ENCODE measurements at regions of chr4 and their contacts with region 1.

Region 1: DNA sequence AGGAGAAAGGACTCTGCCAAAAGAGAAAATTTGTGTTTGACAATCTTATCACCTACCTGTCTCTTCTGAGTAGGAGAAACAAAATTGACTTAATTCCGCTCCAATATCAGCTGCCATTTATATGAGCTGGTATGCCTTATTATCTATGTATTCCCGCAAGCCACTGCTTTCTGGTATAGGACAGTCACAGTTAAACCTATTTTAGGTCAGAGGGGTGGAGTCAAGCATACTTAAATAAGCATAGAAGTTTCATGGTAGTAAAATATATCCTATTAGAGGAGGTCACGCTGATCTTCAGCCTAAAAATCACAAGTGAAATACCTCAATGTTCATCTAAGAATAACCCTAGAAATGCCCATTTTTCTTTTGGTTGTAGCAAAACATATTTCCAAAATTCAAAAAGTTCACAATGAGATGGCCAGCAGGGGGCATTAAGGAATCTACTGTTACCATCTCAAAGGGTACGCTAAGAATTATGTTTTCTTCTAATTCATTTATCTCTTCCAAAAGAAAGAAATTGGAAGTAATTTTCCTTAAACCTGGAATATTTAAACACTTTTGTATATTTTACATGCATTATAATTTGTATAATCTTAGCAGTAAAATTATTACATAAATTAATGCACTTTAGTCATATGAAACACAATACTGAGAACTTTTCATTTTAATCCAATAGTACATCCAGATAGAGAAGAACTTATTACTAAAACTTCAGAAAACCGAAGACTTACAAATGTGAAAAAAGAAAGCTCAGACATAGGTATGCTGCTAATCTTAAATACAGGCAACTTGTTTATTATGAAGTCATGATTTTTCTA is 10.5 kb downstream of the PPAT start:
- DNase-seq: peak; percentile 61
- H3K4me3 ChIP-seq: no peak overlapping the region
- H3K27ac ChIP-seq: no peak overlapping the region
- H3K4me1 ChIP-seq: peaks cover 6% of the 10 kb centered on the region
- H3K27me3 ChIP-seq: no peaks in the 10 kb centered on the region
- CTCF ChIP-seq: peak; percentile 40 to 45
- POLR2A ChIP-seq: no peak

Region 2: GRCh38 chr4:56405016-56405415 is 19.9 kb before region 1 on chr4:
- CTCF ChIA-PET with region 1: interaction called, 16 read pairs
- POLR2A ChIA-PET with region 1: interaction called, 3 read pairs
- dilution Hi-C with region 1: no loop called
- intact Hi-C with region 1: no loop called
- DNase-seq: peak; percentile 84
- H3K4me3 ChIP-seq: no peak overlapping the region
- H3K27ac ChIP-seq: peak overlapping the region; percentile 77
- H3K4me1 ChIP-seq: peaks cover 26% of the 10 kb centered on the region
- H3K27me3 ChIP-seq: no peaks in the 10 kb centered on the region
- CTCF ChIP-seq: no peak
- POLR2A ChIP-seq: no peak

Region 3: GRCh38 chr4:56435306-56435926 is 10.5 kb after region 1 on chr4 and contains the start of gene PPAT:
- CTCF ChIA-PET with region 1: interaction called, 27 read pairs
- POLR2A ChIA-PET with region 1: interaction called, 5 read pairs
- dilution Hi-C with region 1: no loop called
- intact Hi-C with region 1: loop called (anchors 1 kb)
- DNase-seq: peak; percentile 100
- H3K4me3 ChIP-seq: peak within 1 kb of the TSS; percentile 77 to 86 (median 83)
- H3K27ac ChIP-seq: peak within 1 kb of the TSS; percentile 87
- H3K4me1 ChIP-seq: peaks cover 19% of the 10 kb centered on the region
- H3K27me3 ChIP-seq: no peaks in the 10 kb centered on the region
- CTCF ChIP-seq: peak in 1 of 2 donors; percentile 25
- POLR2A ChIP-seq: peak; percentile 83
- total RNA-seq, gene PPAT: 21.8 and 25.5 TPM in 2 replicates

Region 4: GRCh38 chr4:56655209-56655626 is 230.3 kb after region 1 on chr4:
- CTCF ChIA-PET with region 1: no interaction called
- POLR2A ChIA-PET with region 1: no interaction called
- dilution Hi-C with region 1: no loop called
- intact Hi-C with region 1: no loop called
- DNase-seq: no peak
- H3K4me3 ChIP-seq: peak overlapping the region; percentile 54 to 71 (median 54)
- H3K27ac ChIP-seq: no peak overlapping the region
- H3K4me1 ChIP-seq: peaks cover 22% of the 10 kb centered on the region
- H3K27me3 ChIP-seq: peaks cover 0 to 9% of the 10 kb centered on the region in 2 experiments
- CTCF ChIP-seq: no peak
- POLR2A ChIP-seq: no peak

Region 5: GRCh38 chr4:57182132-57182874 is 757.4 kb after region 1 on chr4:
- CTCF ChIA-PET with region 1: no interaction called
- POLR2A ChIA-PET with region 1: no interaction called
- dilution Hi-C with region 1: no loop called
- intact Hi-C with region 1: no loop called
- DNase-seq: peak; percentile 31
- H3K4me3 ChIP-seq: no peak overlapping the region
- H3K27ac ChIP-seq: no peak overlapping the region
- H3K4me1 ChIP-seq: no peaks in the 10 kb centered on the region
- H3K27me3 ChIP-seq: peaks cover 2 to 4% of the 10 kb centered on the region in 2 experiments
- CTCF ChIP-seq: no peak
- POLR2A ChIP-seq: no peak